Body of pancreas (tissue), 4 donors: ENCODE measurements at regions of chr1 and their contacts with region 1.

Region 1: DNA sequence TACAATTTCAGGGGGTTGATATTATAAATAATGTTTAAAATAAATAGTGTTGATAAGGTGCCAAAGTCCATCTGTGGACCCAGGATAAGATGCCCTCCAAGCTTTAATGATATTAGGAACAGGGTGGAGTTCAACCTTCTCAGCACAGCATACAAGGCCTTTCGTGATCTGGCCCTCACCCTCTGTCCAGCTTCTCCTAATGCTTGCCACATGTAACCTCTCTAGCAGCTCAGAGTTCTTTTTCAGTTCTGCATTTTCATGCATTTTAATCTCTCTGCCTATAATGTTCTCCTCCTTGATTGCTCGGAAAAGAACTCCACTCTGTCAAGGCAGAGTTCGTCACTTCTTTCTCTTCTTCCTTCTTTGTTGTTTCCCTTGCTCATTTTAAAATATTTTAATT is 21.4 kb upstream of the SMAP2 start:
- DNase-seq: peak in 1 of 4 donors; percentile 22
- ATAC-seq: no peak
- H3K4me3 ChIP-seq: no peak overlapping the region
- H3K27ac ChIP-seq: peak overlapping the region in 1 of 4 donors; percentile 69
- H3K4me1 ChIP-seq: no peaks in the 10 kb centered on the region
- H3K27me3 ChIP-seq: no peaks in the 10 kb centered on the region
- CTCF ChIP-seq: no peak
- POLR2A ChIP-seq: no peak

Region 2: DNA sequence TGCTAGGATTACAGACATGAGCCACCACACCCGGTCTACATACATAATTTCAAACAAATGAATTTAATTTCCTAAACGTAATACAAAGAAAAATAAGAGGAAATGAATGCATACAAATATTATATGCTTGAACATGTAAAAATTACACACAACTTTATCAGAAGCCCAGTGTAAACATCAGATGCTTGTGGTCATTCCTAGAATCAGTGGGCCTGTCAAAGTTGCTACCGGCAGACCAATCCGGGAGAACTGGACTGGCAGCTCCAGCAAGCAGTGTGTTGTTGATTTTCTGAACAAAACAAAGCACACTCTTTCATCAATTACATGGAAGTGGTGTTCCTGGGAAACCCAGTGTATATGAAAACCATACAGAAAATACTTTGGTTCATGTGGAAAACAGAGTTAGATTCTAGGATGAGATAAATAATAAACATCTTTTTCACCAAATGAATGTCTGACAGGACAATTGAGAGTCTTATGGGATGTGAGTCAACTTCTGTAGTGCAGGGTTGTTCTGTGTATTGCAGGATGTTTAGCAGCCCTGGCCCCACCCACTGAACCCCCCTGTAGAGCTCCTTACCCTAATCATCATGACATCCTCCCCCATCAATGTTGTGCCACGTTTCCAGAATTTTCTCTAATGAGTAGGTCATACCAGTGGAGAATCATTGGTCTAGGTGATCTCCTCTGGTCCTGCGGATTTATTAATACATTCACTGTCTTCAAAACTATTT is 363.3 kb before region 1 on chr1:
- intact Hi-C with region 1: no loop called
- DNase-seq: peak in 2 of 4 donors; percentile 26 to 40
- ATAC-seq: no peak
- H3K4me3 ChIP-seq: no peak overlapping the region
- H3K27ac ChIP-seq: no peak overlapping the region
- H3K4me1 ChIP-seq: peaks cover 8% of the 10 kb centered on the region
- H3K27me3 ChIP-seq: no peaks in the 10 kb centered on the region
- CTCF ChIP-seq: no peak
- POLR2A ChIP-seq: no peak

Region 3: GRCh38 chr1:40404670-40405462 is 52.7 kb after region 1 on chr1:
- intact Hi-C with region 1: loop called (anchors 10 kb)
- DNase-seq: peak; percentile 38 to 59 (median 44)
- ATAC-seq: peak; percentile 85
- H3K4me3 ChIP-seq: no peak overlapping the region
- H3K27ac ChIP-seq: no peak overlapping the region
- H3K4me1 ChIP-seq: peaks cover 17% of the 10 kb centered on the region
- H3K27me3 ChIP-seq: no peaks in the 10 kb centered on the region
- CTCF ChIP-seq: peak; percentile 70 to 92 (median 85)
- POLR2A ChIP-seq: no peak